ENCODE measurements at regions of chr12 and their contacts with region 1.

Region 1: DNA sequence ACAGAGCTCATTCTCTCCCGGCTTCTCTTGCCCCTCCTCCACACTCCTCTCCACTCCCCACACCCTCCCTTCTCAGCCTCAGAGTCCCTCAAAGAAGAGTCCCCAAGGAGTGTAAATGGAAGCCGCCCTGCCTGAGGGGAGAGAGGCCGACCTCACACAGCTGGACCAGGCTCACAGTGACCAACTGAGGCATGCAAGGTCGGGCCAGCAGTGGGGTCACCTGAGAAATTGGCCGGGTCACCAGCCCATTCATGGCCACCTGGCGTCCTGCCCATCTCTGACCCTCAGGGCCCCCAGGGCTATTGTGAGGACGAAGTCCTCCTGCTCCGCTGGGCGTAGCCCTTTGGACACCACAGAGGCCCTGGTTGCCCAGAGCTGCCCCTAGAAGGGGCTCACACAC is 49.5 kb upstream of the NUAK1 start:
- DNase-seq: no peak
- H3K4me3 ChIP-seq: no peak overlapping the region
- H3K27ac ChIP-seq: no peak overlapping the region
- H3K4me1 ChIP-seq: peaks cover 0 to 7% (median 2%) of the 10 kb centered on the region in 4 experiments; a peak in 4 of 7 replicates
- H3K27me3 ChIP-seq: no peaks in the 10 kb centered on the region
- CTCF ChIP-seq: no peak
- EP300 ChIP-seq: no peak
- POLR2A ChIP-seq: no peak
- RAD21 ChIP-seq: no peak

Region 2: GRCh38 chr12:106058256-106059182 is 129.7 kb before region 1 on chr12:
- CTCF ChIA-PET with region 1: no interaction called
- POLR2A ChIA-PET with region 1: no interaction called
- DNase-seq: no peak
- H3K4me3 ChIP-seq: no peak overlapping the region
- H3K27ac ChIP-seq: no peak overlapping the region
- H3K4me1 ChIP-seq: peaks cover 0 to 1% (median 0%) of the 10 kb centered on the region in 4 experiments; a peak in 1 of 7 replicates
- H3K27me3 ChIP-seq: no peaks in the 10 kb centered on the region
- CTCF ChIP-seq: no peak
- EP300 ChIP-seq: no peak
- POLR2A ChIP-seq: no peak
- RAD21 ChIP-seq: no peak

Region 3: GRCh38 chr12:106149096-106149784 is 39.0 kb before region 1 on chr12:
- CTCF ChIA-PET with region 1: interaction called, 10 read pairs
- POLR2A ChIA-PET with region 1: no interaction called
- DNase-seq: no peak
- H3K4me3 ChIP-seq: no peak overlapping the region
- H3K27ac ChIP-seq: no peak overlapping the region
- H3K4me1 ChIP-seq: peaks cover 0 to 7% (median 1%) of the 10 kb centered on the region in 4 experiments; a peak in 2 of 7 replicates
- H3K27me3 ChIP-seq: no peaks in the 10 kb centered on the region
- CTCF ChIP-seq: peak; percentile 3 to 69 (median 53); a peak in 3 of 4 replicates
- EP300 ChIP-seq: no peak
- POLR2A ChIP-seq: no peak
- RAD21 ChIP-seq: peak; percentile 56 to 70

Region 4: DNA sequence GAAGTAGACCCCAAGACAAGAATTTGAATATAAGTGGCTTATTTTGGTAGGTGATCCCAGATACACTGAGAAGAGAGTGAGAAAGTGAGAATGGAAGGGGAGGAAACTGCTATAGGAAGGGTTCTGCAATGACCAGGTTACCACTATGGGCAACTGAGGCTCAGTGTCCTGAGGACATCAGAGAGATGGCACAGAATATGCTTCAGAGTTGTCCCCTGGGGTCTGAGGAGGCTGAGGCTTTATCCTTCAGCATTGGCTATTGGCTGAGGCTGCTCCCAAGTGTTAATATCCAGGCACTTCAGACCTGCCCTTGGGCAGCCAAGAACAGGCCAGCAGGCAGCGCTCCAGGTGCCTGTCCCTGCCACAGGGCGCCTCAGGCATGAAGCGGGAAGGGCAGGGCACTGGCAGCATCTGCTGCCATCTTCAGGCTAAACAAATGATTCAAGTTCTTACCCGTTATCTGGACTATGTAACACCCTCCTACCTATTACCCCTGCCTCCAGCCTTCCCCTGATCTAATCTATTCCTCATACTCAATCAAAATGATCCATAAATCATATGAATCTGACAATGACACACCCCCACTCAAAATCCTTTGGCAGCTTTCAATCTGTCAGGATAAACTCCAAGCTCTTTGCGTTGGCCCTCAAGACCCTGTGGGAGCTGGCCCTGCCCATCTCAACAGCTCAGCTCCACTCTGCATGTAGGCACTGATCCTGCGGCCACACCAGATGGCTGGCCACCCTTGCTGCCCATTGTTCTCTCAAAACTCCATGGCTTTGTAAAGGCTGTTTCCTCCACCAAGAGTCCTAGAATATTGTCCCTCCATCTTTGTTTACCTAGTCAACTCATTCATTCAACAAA is 17.2 kb after region 1 on chr12:
- CTCF ChIA-PET with region 1: interaction called, 19 read pairs
- POLR2A ChIA-PET with region 1: no interaction called
- DNase-seq: no peak
- H3K4me3 ChIP-seq: no peak overlapping the region
- H3K27ac ChIP-seq: no peak overlapping the region
- H3K4me1 ChIP-seq: no peaks in the 10 kb centered on the region
- H3K27me3 ChIP-seq: no peaks in the 10 kb centered on the region
- CTCF ChIP-seq: peak in 2 of 3 experiments; percentile 6 to 49; a peak in 3 of 4 replicates
- EP300 ChIP-seq: no peak
- POLR2A ChIP-seq: no peak
- RAD21 ChIP-seq: peak; percentile 59 to 67

Region 5: DNA sequence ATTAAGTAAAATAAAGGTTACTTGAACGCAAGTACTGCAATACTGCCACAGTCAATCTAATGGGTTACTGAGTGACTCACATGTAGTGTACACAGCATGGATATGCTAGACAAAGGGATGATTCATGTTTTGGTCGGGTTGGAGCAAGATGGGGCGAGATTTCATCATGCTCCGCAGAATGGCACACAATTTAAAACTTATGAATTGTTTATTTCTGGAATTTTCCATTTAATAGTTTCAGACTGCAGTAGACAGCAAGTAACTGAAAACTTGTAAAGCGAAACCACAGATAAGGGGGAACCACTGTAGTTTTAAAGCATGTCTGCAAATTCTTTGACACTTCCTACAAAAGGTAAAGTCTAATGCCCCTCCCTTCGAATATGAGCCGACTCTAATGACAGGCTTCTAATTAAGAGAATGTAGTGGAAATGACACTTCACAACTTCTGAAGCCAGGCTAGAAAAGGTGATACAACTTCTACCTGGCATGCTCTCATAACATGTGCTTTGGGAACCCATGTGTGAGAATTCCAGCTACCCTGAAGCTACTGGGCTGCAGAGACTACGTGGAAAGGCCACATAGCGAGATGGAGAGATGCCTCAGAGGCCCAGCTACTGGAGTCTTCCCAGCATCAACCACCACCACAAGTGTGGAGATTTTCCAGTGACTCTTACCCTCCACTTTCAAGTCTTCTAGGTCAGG is 100.4 kb after region 1 on chr12:
- CTCF ChIA-PET with region 1: no interaction called
- POLR2A ChIA-PET with region 1: no interaction called
- DNase-seq: no peak
- H3K4me3 ChIP-seq: no peak overlapping the region
- H3K27ac ChIP-seq: no peak overlapping the region
- H3K4me1 ChIP-seq: no peaks in the 10 kb centered on the region
- H3K27me3 ChIP-seq: no peaks in the 10 kb centered on the region
- CTCF ChIP-seq: no peak
- EP300 ChIP-seq: no peak
- POLR2A ChIP-seq: no peak
- RAD21 ChIP-seq: no peak